Activated naive CD4-positive, alpha-beta T cell treated with anti-CD3 and anti-CD28 coated beads for 36 hours (primary cell): ENCODE measurements at regions of chr10 and their contacts with region 1.

Region 1: DNA sequence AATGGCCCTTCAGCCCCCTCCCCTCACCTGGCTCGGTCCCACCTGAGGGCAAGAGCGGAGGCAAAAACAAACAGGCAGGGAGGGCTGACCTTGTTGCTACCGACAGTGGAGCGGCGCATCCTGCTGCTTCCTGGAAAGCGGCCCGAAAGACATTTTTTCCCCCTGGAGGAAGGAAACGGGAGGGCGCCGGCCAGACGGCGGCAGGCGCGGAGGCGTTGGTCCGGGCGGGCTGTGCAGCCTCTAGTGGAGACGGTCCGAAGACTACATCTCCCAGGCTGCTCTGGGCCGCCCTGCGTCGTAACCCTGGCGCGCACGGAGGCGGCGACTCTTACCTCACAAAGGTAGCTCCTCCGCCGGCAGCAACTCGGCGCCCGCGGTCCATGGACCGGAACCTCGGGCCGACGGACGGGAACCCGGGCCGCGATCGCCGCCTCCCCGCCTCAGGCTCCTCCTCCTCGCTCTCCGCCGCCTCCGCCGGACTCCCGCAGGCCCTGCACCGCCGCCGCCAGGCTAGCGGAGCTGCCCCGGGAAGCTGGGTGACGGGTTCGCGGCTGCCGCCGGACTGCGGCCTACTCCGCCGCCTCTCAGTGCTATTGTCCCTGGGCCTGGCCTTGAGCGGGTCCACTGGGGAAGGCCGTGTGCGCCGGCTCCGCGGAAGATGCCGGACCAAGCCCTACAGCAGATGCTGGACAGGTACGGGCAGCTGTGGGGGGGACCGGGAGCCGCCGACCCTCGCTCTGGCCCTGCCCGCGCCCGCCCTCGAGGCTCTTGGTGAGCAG is at the starts of genes CPEB3 and MARCHF5:
- DNase-seq: peak; percentile 95
- H3K4me3 Mint-ChIP-seq: peak within 1 kb of the TSS; percentile 81
- H3K27ac Mint-ChIP-seq: peak within 1 kb of the TSS; percentile 77
- H3K4me1 Mint-ChIP-seq: peaks cover 25% of the 10 kb centered on the region
- H3K27me3 Mint-ChIP-seq: no peaks in the 10 kb centered on the region
- total RNA-seq, gene CPEB3: 1.0 to 1.3 TPM
- total RNA-seq, gene MARCHF5: 26.1 to 28.1 TPM

Region 2: GRCh38 chr10:91944880-91945630 is 346.0 kb before region 1 on chr10:
- CTCF ChIA-PET with region 1: no interaction called
- intact Hi-C with region 1: loop called (anchors 1 kb)
- DNase-seq: peak; percentile 34
- H3K4me3 Mint-ChIP-seq: no peak overlapping the region
- H3K27ac Mint-ChIP-seq: no peak overlapping the region
- H3K4me1 Mint-ChIP-seq: peaks cover 18% of the 10 kb centered on the region
- H3K27me3 Mint-ChIP-seq: no peaks in the 10 kb centered on the region

Region 3: DNA sequence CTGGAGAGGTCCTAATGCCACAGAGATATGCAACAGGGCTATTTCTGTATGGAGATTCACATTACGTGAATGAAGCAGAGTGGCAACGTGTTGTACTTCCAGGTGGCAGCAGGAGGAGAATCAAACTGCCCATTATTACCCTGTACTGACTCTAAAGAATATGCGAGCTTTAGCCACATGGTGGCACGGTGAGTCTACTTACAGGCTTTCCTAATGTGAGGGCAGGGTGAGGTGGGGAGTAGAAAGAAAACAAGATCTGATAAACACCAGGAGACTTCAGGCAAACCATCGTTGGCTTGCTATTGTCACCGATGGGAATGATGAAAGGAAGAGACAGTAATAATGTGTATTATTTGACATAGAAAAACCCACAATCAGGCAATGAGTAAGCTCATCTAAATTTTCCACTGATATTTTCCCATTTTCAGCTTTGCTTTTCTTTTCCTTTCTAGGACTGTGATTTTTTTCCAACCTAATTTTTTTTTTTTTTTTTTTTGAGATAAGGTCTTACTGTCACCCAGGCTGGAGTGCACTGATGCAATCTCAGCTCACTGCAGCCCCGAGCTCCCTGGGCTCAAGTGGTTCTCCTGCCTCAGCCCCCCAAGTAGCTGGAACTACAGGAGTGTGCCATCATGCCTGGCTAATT is 203.2 kb before region 1 on chr10:
- CTCF ChIA-PET with region 1: interaction called, 4 read pairs
- intact Hi-C with region 1: loop called (anchors 1 kb)
- DNase-seq: peak; percentile 79
- H3K4me3 Mint-ChIP-seq: no peak overlapping the region
- H3K27ac Mint-ChIP-seq: no peak overlapping the region
- H3K4me1 Mint-ChIP-seq: peaks cover 6% of the 10 kb centered on the region
- H3K27me3 Mint-ChIP-seq: no peaks in the 10 kb centered on the region

Region 4: DNA sequence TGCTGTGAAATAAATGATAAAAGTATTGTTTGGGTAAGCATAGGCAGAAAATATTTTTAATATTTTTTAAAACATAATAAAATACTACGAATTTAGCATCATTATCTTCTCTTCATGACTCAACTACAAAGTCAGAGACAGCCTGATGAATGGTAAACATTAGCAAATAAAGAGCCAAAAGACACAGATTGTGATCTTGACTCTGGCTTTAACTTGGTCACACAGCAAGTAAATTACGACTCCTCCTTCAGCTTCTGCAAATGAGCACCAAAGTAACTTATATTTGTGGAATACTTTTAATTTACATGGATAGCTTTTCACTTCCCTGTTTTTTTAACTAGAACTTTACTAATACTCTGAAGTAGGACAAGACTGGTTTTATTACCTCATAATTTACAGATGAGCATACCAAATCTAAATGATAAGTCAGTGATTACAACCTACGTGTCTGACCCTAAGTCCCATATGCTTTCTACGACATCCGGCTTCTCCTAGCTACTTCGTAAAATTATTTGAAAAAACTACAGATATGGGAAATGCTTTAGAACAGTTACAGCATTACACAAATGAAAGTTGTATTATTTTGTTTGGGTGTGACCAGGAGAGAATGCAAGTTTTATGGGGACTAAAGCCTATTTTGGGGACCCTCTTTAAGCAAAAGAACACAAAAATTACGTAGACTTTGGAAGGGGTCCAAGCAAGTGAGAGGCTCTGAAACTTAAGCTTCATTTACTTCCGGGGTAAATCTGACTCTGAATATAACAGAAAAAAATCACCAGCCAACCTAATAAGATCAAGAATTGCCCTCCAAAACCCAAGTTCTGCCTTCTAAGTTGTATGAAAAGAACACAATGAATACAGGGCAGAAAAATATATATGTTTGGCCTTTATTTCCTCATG is 133.9 kb before region 1 on chr10:
- CTCF ChIA-PET with region 1: no interaction called
- intact Hi-C with region 1: no loop called
- DNase-seq: no peak
- H3K4me3 Mint-ChIP-seq: no peak overlapping the region
- H3K27ac Mint-ChIP-seq: no peak overlapping the region
- H3K4me1 Mint-ChIP-seq: no peaks in the 10 kb centered on the region
- H3K27me3 Mint-ChIP-seq: no peaks in the 10 kb centered on the region

Region 5: GRCh38 chr10:92240289-92241157 is 50.5 kb before region 1 on chr10:
- CTCF ChIA-PET with region 1: interaction called, 3 read pairs
- intact Hi-C with region 1: loop called (anchors 1 kb)
- DNase-seq: peak; percentile 30
- H3K4me3 Mint-ChIP-seq: peak overlapping the region; percentile 73
- H3K27ac Mint-ChIP-seq: no peak overlapping the region
- H3K4me1 Mint-ChIP-seq: peaks cover 13% of the 10 kb centered on the region
- H3K27me3 Mint-ChIP-seq: peaks cover 9% of the 10 kb centered on the region

Region 6: DNA sequence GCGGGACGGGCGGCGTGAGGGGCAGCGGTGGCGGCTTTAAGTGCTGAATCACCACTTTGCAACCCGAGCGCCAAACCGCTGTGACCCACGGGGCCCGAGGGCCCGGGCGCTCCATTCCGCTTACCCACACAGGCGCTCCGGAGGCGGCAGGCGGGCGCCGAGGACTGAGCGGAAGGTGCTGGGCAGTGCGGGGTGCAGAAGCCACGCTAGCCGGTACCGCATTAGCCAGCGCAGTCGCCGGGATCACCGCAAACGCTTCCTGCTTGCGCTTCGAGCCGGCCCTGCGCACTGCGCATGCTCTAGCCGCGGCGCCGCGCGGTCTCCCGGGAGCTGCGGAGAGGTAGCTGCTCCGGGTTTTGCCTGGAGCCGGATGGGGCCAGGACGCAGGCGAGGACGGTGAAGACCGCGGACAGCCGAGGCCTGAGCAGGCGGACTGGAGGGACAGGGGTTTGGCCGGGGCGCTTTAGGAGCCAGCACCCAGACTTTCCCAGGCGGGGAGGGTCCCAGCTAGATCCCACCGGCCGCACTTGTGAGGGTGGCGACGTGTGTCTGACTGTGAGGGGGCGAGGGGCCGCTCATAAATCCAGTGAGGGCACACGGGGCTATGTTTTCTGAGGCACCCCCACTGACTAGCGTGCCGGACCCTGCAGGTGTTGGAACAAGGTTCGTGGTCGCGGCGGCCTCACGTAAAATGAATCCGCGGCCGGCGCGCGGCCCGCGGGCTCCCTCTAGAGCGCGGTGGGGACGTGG is 282.9 kb after region 1 on chr10 and contains the start of gene IDE:
- CTCF ChIA-PET with region 1: no interaction called
- intact Hi-C with region 1: loop called (anchors 1 kb)
- DNase-seq: peak; percentile 88
- H3K4me3 Mint-ChIP-seq: peak within 1 kb of the TSS; percentile 81
- H3K27ac Mint-ChIP-seq: peak within 1 kb of the TSS; percentile 85
- H3K4me1 Mint-ChIP-seq: peaks cover 34% of the 10 kb centered on the region
- H3K27me3 Mint-ChIP-seq: no peaks in the 10 kb centered on the region
- total RNA-seq, gene IDE: 30.8 to 31.2 TPM

Region 7: DNA sequence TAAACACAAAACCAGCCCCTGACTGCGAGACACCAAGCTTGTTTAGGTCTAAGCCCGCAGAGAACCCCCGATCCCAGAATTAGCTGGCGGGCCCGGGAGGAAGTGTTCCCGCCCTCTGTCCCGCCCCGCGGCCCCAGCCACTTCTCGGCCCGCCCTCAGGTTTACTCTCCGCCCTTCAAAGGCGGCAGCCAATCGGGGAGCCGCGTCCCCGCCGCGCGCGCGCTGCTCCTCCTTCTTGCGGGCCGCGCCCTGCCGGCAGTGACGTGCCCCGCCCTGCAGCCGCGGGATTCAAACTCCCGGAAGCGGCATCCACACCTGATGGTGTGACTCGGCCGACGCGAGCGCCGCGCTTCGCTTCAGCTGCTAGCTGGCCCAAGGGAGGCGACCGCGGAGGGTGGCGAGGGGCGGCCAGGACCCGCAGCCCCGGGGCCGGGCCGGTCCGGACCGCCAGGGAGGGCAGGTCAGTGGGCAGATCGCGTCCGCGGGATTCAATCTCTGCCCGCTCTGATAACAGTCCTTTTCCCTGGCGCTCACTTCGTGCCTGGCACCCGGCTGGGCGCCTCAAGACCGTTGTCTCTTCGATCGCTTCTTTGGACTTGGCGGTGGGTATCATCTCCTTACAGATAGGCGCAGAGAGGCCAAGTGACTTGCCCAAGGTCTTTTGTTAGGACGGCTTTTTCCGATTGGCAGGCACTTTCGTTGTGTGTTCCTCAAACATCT is 1205.5 kb after region 1 on chr10 and contains the start of gene CEP55:
- CTCF ChIA-PET with region 1: no interaction called
- intact Hi-C with region 1: loop called (anchors 5 kb)
- DNase-seq: peak; percentile 96
- H3K4me3 Mint-ChIP-seq: peak within 1 kb of the TSS; percentile 90
- H3K27ac Mint-ChIP-seq: peak within 1 kb of the TSS; percentile 63
- H3K4me1 Mint-ChIP-seq: peaks cover 18% of the 10 kb centered on the region
- H3K27me3 Mint-ChIP-seq: peaks cover 7% of the 10 kb centered on the region
- total RNA-seq, gene CEP55: 64.4 to 68.2 TPM